ENCODE measurements at regions of chr1 and their contacts with region 1.

Region 1: DNA sequence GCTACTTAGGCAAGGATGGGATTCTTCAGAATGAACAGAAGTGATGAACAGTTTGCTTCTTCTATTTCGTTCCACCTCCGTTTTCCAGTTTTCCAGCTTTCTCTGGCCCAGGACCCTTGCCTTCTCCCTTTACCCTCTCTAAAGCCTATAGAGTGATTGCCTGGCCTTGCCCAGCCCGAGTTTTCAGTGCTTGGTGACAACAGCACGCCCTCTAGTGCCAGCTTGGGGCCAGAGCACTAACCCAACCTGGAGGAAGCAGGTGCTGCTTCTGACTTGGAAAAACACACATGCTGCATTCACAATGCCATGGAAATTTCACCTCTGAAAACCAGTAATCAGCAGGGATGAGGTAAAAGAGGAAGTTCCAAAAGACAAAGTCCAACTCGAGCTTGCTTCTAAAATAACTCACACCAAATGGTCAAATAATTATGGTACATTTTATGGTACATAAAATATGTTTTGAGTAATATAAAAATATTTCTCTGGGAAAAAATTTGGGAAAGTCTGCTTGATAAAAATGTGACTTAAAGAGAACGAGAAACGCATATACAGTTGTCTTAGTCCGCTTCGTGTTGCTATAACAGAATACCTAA is 26.1 kb downstream of the UBE2T start:
- DNase-seq: no peak
- H3K4me3 ChIP-seq: no peak overlapping the region
- CTCF ChIP-seq: peak; percentile 96

Region 2: GRCh38 chr1:202029171-202029665 is 286.5 kb before region 1 on chr1:
- CTCF ChIA-PET with region 1: no interaction called
- POLR2A ChIA-PET with region 1: no interaction called
- DNase-seq: peak; percentile 63
- H3K4me3 ChIP-seq: no peak overlapping the region
- CTCF ChIP-seq: no peak

Region 3: GRCh38 chr1:202200112-202200566 is 115.5 kb before region 1 on chr1:
- CTCF ChIA-PET with region 1: interaction called, 182 read pairs
- POLR2A ChIA-PET with region 1: no interaction called
- DNase-seq: no peak
- H3K4me3 ChIP-seq: no peak overlapping the region
- CTCF ChIP-seq: no peak

Region 4: DNA sequence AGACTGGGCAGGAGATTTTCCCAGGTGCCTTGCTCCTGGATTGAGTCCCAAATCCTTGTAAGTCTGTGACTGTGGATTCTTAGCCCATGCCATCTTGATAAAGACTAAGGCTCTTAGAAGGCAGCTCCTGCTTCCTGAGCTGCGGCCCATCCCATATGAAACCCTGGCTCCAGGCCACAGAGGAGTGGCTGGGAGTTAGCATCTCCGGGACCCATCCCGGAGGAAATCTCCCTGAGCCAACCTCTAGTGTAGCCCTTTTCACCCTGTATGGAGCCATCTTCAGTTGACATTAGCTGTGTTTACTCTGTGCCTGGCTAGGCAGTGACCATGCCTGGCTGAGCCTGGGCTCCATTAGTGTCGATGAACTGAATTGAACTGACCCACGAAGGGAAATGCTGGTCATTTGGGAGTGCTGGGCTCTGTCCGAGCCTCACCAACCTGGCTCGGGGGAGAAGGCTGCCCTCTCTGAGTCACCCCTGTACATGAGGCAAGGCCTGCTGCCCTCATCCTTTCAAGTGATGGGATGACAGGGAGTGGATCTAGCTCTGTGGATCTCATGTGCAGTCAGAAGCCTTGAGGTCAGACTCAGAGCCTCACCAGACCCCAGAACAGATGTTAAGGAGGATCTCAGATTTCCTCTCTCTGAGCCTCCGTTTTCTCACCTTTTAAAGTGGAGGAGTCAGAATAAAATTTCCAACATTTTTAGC is 84.6 kb before region 1 on chr1:
- CTCF ChIA-PET with region 1: interaction called, 10 read pairs
- POLR2A ChIA-PET with region 1: no interaction called
- DNase-seq: no peak
- H3K4me3 ChIP-seq: no peak overlapping the region
- CTCF ChIP-seq: no peak

Region 5: GRCh38 chr1:202283379-202283844 is 32.3 kb before region 1 on chr1:
- CTCF ChIA-PET with region 1: interaction called, 18 read pairs
- POLR2A ChIA-PET with region 1: no interaction called
- DNase-seq: peak; percentile 40
- H3K4me3 ChIP-seq: no peak overlapping the region
- CTCF ChIP-seq: no peak

Region 6: GRCh38 chr1:202304375-202304774 is 11.3 kb before region 1 on chr1:
- CTCF ChIA-PET with region 1: interaction called, 113 read pairs
- POLR2A ChIA-PET with region 1: no interaction called
- DNase-seq: no peak
- H3K4me3 ChIP-seq: no peak overlapping the region
- CTCF ChIP-seq: no peak

Region 7: DNA sequence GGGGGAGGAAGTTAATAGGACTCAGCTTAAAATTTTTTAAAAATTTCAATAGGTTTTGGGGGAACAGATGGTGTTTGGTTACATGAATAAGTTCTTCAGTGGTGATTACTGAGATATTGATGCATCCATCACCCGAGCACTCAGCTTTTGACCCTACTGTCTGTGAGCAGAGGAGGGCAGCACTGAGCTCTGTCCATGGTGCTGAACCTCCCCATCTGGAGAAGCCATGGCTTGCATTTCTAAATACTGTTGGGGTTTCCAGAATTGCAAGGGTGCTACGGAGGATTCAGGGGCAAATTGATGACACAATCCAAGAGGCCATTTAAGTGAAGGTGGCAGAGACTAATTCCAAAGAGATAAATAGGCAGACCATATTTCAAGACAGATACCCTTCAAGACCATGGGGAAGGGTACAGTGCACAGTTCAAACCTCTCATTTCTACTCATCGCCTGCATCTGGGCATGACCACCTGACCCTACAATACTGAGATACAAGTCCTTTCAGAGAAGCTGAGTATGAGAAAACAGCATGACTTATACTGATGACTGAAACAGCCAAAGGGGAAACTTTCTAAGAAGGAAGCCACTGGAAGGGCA is 377.4 kb after region 1 on chr1:
- CTCF ChIA-PET with region 1: no interaction called
- POLR2A ChIA-PET with region 1: no interaction called
- DNase-seq: no peak
- H3K4me3 ChIP-seq: no peak overlapping the region
- CTCF ChIP-seq: peak; percentile 38

Region 8: GRCh38 chr1:202716654-202717053 is 401.0 kb after region 1 on chr1:
- CTCF ChIA-PET with region 1: interaction called, 13 read pairs
- POLR2A ChIA-PET with region 1: no interaction called
- DNase-seq: no peak
- H3K4me3 ChIP-seq: no peak overlapping the region
- CTCF ChIP-seq: no peak

Measured in AG04449 (cell line).